ENCODE measurements at regions of chr17 and their contacts with region 1.

Region 1: DNA sequence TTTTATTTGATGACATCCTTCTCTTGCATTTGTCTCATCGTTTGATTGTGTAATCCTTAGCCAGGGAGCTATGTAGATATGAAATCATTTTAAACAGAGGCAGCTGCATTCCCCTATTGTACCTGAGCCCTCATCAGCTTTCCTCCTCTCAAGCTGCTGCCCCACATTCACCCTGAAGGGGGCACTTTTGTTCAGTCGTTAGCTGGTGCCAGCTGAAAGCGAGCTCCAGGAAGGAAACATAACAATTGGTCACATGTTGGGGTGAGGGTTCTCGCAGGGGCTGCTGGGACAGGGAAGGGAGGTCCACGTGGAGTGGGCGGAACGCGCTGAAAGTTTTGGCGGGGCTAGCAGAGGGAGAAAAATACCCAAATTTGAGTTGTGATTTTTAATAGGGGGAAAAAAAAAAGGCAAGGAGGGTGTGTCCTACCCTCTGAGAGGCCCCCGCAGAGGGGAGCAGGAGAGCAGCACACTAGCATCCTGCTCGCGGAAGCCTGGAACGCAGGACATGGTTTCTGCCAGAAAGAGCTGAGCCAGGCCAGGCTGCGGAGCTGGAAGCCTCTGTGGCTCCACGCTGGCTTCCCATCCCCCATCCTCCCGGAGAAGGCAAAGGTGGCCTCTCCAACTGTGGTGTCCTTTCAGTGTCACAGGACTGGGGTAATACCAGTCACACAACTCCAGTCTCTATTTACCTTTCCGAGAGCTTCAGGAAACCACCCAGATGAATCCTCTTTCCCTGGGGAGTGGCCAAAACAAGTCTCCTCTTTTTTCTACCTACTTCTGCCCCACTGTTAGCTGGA is 8.5 kb upstream of the MSL1 start:
- DNase-seq: peak; percentile 97
- H3K4me3 Mint-ChIP-seq: peak overlapping the region; percentile 74
- H3K27ac Mint-ChIP-seq: peak overlapping the region; percentile 78
- H3K4me1 Mint-ChIP-seq: peaks cover 39% of the 10 kb centered on the region
- H3K27me3 Mint-ChIP-seq: no peaks in the 10 kb centered on the region
- CTCF ChIP-seq: peak; percentile 55

Region 2: DNA sequence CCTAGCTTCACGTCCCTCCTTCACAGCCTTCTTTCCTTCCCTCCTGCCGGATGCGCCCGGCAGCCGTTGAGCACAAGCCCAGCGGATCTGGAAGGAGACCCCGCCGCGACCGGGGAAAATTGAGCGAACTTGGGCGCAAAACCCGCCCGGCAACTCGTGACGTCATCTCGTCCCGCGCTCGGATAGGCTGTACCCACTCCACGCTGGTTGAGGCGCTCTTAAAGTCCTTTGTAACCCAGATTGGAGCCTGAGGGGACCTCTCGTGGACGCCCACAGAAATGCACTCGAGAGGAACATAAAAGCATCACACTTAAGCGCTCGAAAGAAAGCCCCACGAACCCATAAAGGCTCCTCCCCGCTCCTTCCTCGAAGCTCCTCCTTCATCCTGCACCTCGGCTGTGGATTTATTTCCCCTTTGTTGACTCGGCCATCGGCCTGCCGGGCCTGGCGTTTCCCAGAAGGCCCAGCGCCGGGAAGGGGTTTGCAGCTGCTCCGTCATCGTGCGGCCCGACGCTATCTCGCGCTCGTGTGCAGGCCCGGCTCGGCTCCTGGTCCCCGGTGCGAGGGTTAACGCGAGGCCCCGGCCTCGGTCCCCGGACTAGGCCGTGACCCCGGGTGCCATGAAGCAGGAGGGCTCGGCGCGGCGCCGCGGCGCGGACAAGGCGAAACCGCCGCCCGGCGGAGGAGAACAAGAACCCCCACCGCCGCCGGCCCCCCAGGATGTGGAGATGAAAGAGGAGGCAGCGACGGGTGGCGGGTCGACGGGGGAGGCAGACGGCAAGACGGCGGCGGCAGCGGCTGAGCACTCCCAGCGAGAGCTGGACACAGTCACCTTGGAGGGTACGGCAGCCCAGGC is 132.7 kb before region 1 on chr17 and contains the start of gene PSMD3:
- CTCF ChIA-PET with region 1: interaction called, 4 read pairs
- POLR2A ChIA-PET with region 1: interaction called, 10 read pairs
- intact Hi-C with region 1: no loop called
- DNase-seq: peak; percentile 99
- H3K4me3 Mint-ChIP-seq: peak within 1 kb of the TSS; percentile 96
- H3K27ac Mint-ChIP-seq: peak within 1 kb of the TSS; percentile 98
- H3K4me1 Mint-ChIP-seq: peaks cover 26% of the 10 kb centered on the region
- H3K27me3 Mint-ChIP-seq: no peaks in the 10 kb centered on the region
- CTCF ChIP-seq: peak; percentile 50
- total RNA-seq, gene PSMD3: 74.2 and 95.3 TPM in 2 replicates

Region 3: DNA sequence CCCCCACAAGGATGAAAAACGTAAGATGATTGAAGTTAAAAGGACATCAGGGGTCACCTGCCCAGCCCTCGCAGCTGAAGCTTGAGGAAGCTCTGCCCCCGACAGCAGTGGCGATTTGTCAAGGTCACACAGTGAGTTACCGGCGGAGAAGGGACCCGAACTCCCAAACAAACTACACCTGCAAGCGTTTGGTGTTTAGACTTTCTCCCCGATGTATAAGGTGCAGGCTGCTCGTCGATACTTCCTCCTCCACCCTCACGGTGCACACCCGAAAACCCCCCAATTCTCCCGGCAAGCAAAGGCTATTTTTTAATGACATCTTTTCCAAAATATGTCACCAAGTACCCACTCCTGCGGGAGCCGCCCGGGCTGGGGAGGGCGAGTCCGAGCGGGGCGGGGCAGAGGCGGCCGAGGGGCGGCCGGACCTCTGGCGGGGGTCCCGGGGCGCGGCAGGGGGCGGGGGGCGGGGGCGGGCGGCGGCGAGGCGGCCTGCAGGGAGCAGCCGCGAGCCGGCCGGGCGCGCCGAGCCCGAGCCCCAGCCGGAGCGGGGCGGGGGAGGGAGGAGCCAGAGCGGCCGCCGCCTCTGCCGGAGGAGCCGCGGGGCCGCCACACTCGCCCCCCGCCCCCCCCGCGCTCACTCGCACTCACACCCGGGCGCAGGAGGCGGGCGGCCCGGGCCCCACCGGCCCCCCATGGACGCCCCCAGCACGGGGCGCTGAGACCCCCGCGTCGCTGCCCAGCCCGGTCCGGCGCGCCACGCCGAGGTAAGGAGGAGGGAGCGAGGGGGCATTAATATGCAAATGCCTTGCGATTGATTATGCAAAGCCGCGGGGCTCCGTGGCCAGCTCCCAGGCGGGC is 50.8 kb before region 1 on chr17 and contains the start of gene THRA:
- CTCF ChIA-PET with region 1: interaction called, 75 read pairs
- POLR2A ChIA-PET with region 1: interaction called, 12 read pairs
- intact Hi-C with region 1: loop called (anchors 1 kb)
- DNase-seq: peak; percentile 46
- H3K4me3 Mint-ChIP-seq: peak within 1 kb of the TSS; percentile 89
- H3K27ac Mint-ChIP-seq: peak within 1 kb of the TSS; percentile 39
- H3K4me1 Mint-ChIP-seq: peaks cover 33% of the 10 kb centered on the region
- H3K27me3 Mint-ChIP-seq: no peaks in the 10 kb centered on the region
- CTCF ChIP-seq: peak; percentile 22
- total RNA-seq, gene THRA: 5.5 and 6.4 TPM in 2 replicates

Region 4: GRCh38 chr17:40098846-40099618 is 14.3 kb before region 1 on chr17:
- CTCF ChIA-PET with region 1: interaction called, 86 read pairs
- POLR2A ChIA-PET with region 1: interaction called, 340 read pairs
- intact Hi-C with region 1: no loop called
- DNase-seq: peak; percentile 100
- H3K4me3 Mint-ChIP-seq: peak overlapping the region; percentile 95
- H3K27ac Mint-ChIP-seq: peak overlapping the region; percentile 94
- H3K4me1 Mint-ChIP-seq: peaks cover 31% of the 10 kb centered on the region
- H3K27me3 Mint-ChIP-seq: no peaks in the 10 kb centered on the region
- CTCF ChIP-seq: no peak

Region 5: DNA sequence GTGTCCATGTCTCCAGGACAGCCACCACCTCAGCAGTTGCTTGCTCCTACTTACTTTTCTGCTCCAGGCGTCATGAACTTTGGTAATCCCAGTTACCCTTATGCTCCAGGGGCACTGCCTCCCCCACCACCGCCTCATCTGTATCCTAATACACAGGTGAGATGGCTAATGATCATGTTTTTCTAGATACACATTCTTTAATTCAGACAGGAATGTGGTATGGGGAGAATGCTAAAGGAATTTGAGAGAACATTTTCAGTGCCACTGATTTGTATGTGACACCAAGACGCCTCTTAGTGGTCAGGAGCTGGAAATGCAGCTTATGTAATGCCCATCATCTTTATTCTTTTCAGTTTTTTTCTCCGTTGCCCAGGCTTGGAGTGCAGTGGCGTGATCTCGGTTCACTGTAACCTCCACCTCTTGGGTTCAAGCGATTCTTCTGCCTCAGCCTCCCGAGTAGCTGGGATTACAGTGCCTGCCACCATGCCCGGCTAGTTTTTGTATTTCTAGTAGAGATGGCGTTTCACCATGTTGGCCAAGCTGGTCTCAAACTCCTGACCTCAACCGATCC is 55.0 kb after region 1 on chr17:
- CTCF ChIA-PET with region 1: interaction called, 46 read pairs
- POLR2A ChIA-PET with region 1: interaction called, 25 read pairs
- intact Hi-C with region 1: loop called (anchors 1 kb)
- DNase-seq: peak; percentile 57
- H3K4me3 Mint-ChIP-seq: no peak overlapping the region
- H3K27ac Mint-ChIP-seq: peak overlapping the region; percentile 47
- H3K4me1 Mint-ChIP-seq: peaks cover 7% of the 10 kb centered on the region
- H3K27me3 Mint-ChIP-seq: no peaks in the 10 kb centered on the region
- CTCF ChIP-seq: peak; percentile 70

Region 6: DNA sequence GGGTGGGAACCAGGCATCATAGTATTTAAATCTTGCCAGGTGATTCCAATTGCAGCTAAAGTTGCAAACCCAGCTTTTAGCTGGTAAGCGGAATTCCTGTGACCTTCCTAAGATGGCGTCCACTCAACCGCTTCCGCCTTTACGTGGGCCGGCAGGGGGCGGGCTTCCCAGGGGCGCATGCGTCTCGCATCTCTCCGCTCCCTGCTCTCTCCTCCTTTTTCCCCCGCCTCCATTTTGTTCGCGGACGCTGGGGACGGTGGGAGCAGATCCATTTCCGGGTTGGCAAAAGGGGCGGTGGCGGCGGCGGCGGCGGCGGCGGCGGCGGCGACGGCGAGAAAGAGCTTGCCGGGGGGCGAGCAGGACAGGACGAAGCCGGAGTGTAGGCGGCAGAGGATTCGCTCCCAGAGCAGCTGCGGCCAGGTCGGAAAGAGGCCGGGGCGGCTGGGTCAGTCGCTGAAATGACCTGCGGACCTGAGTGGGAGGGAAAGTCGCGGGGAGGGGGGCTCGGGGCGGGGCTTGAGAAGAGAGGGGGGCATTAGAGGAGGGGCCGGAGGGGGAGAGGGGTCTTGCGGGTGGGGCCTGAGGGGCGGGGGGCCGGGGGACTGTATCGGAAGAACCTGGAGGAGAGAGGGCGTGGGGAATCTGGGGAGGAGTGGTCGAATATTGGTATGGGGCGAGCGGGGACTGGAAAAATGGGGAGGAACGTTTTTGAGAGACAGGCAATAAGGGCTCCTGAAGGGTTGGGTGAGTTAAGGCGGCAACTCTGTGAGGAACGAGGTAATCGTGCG is 106.0 kb after region 1 on chr17 and contains the start of gene WIPF2:
- CTCF ChIA-PET with region 1: no interaction called
- POLR2A ChIA-PET with region 1: interaction called, 11 read pairs
- intact Hi-C with region 1: no loop called
- DNase-seq: peak; percentile 97
- H3K4me3 Mint-ChIP-seq: peak within 1 kb of the TSS; percentile 90
- H3K27ac Mint-ChIP-seq: peak within 1 kb of the TSS; percentile 98
- H3K4me1 Mint-ChIP-seq: peaks cover 16% of the 10 kb centered on the region
- H3K27me3 Mint-ChIP-seq: no peaks in the 10 kb centered on the region
- CTCF ChIP-seq: peak; percentile 68
- total RNA-seq, gene WIPF2: 31.9 and 32.8 TPM in 2 replicates